Heart right ventricle (tissue), 16 donors: ENCODE measurements at regions of chr5 and their contacts with region 1.

Region 1: GRCh38 chr5:54263447-54263846 is 46.9 kb downstream of the ARL15 start:
- DNase-seq: no peak
- ATAC-seq: no peak
- H3K4me3 ChIP-seq: no peak overlapping the region
- H3K27ac ChIP-seq: no peak overlapping the region
- H3K4me1 ChIP-seq: peaks cover 0 to 54% (median 8%) of the 10 kb centered on the region in 9 donors
- H3K27me3 ChIP-seq: no peaks in the 10 kb centered on the region
- CTCF ChIP-seq: no peak

Region 2: GRCh38 chr5:54302267-54302687 is 38.8 kb after region 1 on chr5:
- intact Hi-C with region 1: loop called in 3 of 10 experiments (anchors 5 kb)
- DNase-seq: no peak
- ATAC-seq: peak in 4 of 8 donors; percentile 17 to 52 (median 48)
- H3K4me3 ChIP-seq: no peak overlapping the region
- H3K27ac ChIP-seq: peak overlapping the region in 1 of 10 donors; percentile 30
- H3K4me1 ChIP-seq: peaks cover 0 to 82% (median 28%) of the 10 kb centered on the region in 9 donors
- H3K27me3 ChIP-seq: no peaks in the 10 kb centered on the region
- CTCF ChIP-seq: no peak

Region 3: GRCh38 chr5:54867310-54867944 is 604.0 kb after region 1 on chr5:
- intact Hi-C with region 1: loop called in 1 of 10 experiments (anchors 10 kb)
- DNase-seq: no peak
- ATAC-seq: peak in 4 of 8 donors; percentile 31 to 55 (median 47)
- H3K4me3 ChIP-seq: peak overlapping the region in 6 of 10 donors; percentile 13 to 31 (median 25)
- H3K27ac ChIP-seq: no peak overlapping the region
- H3K4me1 ChIP-seq: peaks cover 0 to 7% (median 0%) of the 10 kb centered on the region in 9 donors
- H3K27me3 ChIP-seq: no peaks in the 10 kb centered on the region
- CTCF ChIP-seq: peak; percentile 56 to 82 (median 65)